PC-3 (cell line): ENCODE measurements at regions of chr10 and their contacts with region 1.

Region 1: DNA sequence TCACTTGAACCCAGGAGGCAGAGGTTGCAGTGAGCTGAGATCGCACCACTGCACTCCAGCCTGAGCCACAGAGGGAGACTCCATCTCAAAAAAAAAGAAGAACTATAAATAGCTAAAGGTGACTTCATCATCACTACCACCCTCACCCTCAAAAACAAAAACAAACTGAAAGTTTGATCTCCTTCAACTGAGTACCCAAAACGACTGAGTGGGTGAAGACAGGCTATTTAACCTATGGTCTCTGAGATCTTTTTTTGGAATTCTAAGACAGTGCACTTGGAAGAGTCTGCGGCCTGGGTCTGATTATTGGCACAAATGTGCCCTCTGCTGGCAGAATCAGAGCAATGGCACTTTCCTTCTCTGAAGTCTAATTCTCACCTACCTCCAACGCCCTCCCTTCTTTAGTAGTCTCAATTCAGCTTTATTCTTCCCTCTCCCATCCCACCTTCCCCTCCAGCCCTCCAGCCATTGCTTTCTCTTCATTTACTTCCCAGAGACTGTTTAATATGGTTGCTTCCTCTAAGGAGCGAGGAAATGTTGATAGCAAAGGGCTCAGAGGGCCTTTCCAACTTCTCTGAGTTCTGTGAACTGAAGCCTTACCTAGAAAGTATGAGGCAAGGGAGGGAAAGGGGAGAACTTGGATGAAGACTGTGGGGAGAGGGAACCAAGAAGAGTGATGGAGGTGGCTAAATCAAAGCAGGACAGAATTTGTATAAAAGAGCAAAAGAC is 2.9 kb upstream of the MYOZ1 start:
- DNase-seq: peak; percentile 99
- ATAC-seq: peak; percentile 86
- H3K4me3 ChIP-seq: no peak overlapping the region
- H3K27ac ChIP-seq: no peak overlapping the region
- H3K4me1 ChIP-seq: no peaks in the 10 kb centered on the region
- H3K27me3 ChIP-seq: no peaks in the 10 kb centered on the region
- CTCF ChIP-seq: peak; percentile 100

Region 2: GRCh38 chr10:73529089-73529832 is 114.9 kb before region 1 on chr10:
- CTCF ChIA-PET with region 1: interaction called, 39 read pairs
- POLR2A ChIA-PET with region 1: no interaction called
- intact Hi-C with region 1: loop called (anchors 1 kb)
- DNase-seq: peak; percentile 99
- ATAC-seq: peak; percentile 97
- H3K4me3 ChIP-seq: no peak overlapping the region
- H3K27ac ChIP-seq: no peak overlapping the region
- H3K4me1 ChIP-seq: no peaks in the 10 kb centered on the region
- H3K27me3 ChIP-seq: no peaks in the 10 kb centered on the region
- CTCF ChIP-seq: peak; percentile 100

Region 3: GRCh38 chr10:73591935-73592699 is 52.1 kb before region 1 on chr10:
- CTCF ChIA-PET with region 1: interaction called, 8 read pairs
- POLR2A ChIA-PET with region 1: no interaction called
- intact Hi-C with region 1: loop called (anchors 1 kb)
- DNase-seq: peak; percentile 95
- ATAC-seq: peak; percentile 90
- H3K4me3 ChIP-seq: peak overlapping the region; percentile 46
- H3K27ac ChIP-seq: peak overlapping the region; percentile 65
- H3K4me1 ChIP-seq: peaks cover 59% of the 10 kb centered on the region
- H3K27me3 ChIP-seq: no peaks in the 10 kb centered on the region
- CTCF ChIP-seq: peak; percentile 33; the same call in 1 of the 2 replicates

Region 4: GRCh38 chr10:73791871-73792400 is 147.8 kb after region 1 on chr10:
- CTCF ChIA-PET with region 1: no interaction called
- POLR2A ChIA-PET with region 1: no interaction called
- intact Hi-C with region 1: no loop called
- DNase-seq: no peak
- ATAC-seq: no peak
- H3K4me3 ChIP-seq: no peak overlapping the region
- H3K27ac ChIP-seq: no peak overlapping the region
- H3K4me1 ChIP-seq: peaks cover 5% of the 10 kb centered on the region
- H3K27me3 ChIP-seq: no peaks in the 10 kb centered on the region
- CTCF ChIP-seq: no peak

Region 5: DNA sequence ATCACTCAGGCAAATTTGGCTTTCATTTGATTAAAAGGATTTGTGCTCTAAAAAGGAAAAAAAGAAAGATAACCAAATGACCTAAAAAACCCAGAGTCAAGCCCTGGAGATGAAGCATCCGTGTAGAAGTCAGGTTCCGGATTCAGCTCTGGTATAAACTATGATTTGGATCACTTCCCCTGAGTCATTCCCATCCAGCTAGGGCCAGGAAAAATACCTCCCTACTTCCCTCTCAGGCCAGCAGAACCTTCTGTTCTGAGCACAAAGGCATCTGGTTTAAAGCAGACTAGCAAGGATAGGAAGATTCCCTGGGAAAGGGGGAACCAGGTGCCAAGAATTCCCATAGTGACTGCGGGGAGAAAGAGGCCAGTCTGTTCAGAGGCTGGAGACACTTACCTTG is 192.9 kb after region 1 on chr10:
- CTCF ChIA-PET with region 1: no interaction called
- POLR2A ChIA-PET with region 1: interaction called, 12 read pairs
- intact Hi-C with region 1: no loop called
- DNase-seq: peak; percentile 74
- ATAC-seq: peak; percentile 85
- H3K4me3 ChIP-seq: no peak overlapping the region
- H3K27ac ChIP-seq: peak overlapping the region; percentile 25
- H3K4me1 ChIP-seq: peaks cover 22% of the 10 kb centered on the region
- H3K27me3 ChIP-seq: no peaks in the 10 kb centered on the region
- CTCF ChIP-seq: no peak